Right cardiac atrium (tissue), 5 donors: ENCODE measurements at regions of chr12 and their contacts with region 1.

Region 1: GRCh38 chr12:49872781-49873181 is 29.9 kb upstream of the BCDIN3D start:
- DNase-seq: peak in 2 of 3 donors; percentile 27 to 61
- ATAC-seq: no peak
- H3K4me3 ChIP-seq: no peak overlapping the region
- H3K27ac ChIP-seq: no peak overlapping the region
- H3K4me1 ChIP-seq: peaks cover 14% of the 10 kb centered on the region
- H3K27me3 ChIP-seq: no peaks in the 10 kb centered on the region

Region 2: DNA sequence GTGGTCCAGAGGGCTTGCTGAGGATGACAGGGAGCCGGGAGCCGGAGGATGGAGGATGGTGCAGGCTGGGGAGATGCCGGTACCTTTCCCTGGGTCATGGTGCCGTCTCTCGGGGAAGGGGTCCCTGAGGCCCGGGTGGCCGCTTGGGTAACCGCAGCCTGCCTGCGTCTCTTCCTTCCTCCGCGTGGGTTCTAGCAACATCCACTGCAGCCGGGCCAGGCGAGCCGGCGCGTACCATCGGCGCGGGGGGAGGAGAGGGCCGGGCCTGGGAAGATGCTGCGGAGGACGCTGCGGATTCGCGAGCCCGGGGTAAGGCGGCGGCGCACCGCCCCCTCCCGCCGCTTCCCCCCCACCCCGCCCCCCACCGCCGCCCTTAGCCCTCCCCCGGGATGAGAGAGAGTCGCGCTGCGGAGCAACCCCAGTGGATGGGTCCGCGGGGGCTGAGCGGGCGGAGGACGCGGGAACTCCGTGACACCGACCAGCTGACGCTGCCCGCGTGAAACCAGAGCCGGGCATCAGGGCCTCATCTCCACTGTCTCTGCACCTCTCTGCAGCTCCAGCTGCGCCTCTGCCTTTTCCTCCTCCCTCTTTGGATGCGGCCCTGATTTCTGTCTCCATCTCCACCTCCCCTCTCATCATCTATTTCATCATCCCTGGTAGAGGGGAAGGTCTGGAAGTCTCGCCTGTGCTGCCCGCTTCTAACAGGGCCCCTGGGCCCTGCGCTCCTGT is 31.1 kb after region 1 on chr12 and contains the start of gene FAIM2:
- intact Hi-C with region 1: no loop called
- DNase-seq: peak; percentile 76 to 91 (median 89)
- ATAC-seq: peak; percentile 85 to 90
- H3K4me3 ChIP-seq: peak within 1 kb of the TSS; percentile 34
- H3K27ac ChIP-seq: peak within 1 kb of the TSS; percentile 0
- H3K4me1 ChIP-seq: no peaks in the 10 kb centered on the region
- H3K27me3 ChIP-seq: no peaks in the 10 kb centered on the region
- total RNA-seq, gene FAIM2: 10.4 to 31.1 (median 17.4) TPM

Region 3: GRCh38 chr12:49945394-49946080 is 72.8 kb after region 1 on chr12:
- intact Hi-C with region 1: loop called (anchors 5 to 10 kb)
- DNase-seq: peak; percentile 89 to 95 (median 95)
- ATAC-seq: peak; percentile 93 to 96
- H3K4me3 ChIP-seq: no peak overlapping the region
- H3K27ac ChIP-seq: peak overlapping the region; percentile 26
- H3K4me1 ChIP-seq: no peaks in the 10 kb centered on the region
- H3K27me3 ChIP-seq: no peaks in the 10 kb centered on the region

Region 4: DNA sequence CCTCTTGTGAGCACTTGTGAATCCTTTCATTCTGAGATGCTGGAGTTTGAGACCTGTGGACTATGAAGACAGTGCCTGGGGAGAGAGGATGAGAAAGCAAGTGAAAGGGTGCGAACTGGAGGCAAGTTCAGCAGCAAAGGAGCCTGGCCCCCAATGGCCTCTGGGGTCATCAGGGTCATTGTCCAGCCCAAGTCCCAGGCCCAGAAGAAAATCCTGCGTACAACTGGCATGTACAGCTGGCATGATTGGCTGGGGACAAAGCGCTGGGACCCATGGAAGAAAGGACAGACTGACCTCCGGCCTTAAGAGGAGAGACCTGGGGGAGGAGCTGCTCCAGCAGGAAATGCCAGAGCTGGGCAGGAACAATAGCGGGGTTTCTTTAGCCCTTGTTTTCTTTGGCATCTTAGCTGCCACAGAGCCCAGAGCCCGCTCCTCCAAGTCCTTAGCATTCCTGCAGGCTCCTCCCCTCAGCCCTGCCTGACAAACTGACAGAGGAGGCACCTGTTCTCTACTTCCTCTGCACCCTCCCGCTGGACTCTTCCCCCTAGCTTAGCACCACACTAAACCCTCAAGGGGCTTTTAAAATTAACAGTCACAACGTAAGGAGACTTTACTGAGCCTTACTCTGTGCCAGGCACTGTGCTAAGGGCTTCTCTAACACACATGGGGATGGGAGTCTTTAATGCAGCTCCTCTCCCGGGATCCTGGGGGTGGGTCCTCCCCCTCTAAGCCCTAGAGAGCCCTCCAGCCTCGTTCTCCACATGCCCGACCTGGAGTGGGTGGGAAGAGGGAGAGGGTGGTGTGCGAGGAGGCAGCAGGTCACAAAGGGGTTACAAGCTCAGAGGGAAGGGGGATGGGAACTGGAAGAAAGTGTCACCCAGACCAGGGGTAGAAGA is 87.0 kb after region 1 on chr12:
- intact Hi-C with region 1: loop called in 2 of 4 experiments (anchors 5 to 10 kb)
- DNase-seq: peak in 2 of 3 donors; percentile 68 to 69
- ATAC-seq: peak; percentile 26 to 60
- H3K4me3 ChIP-seq: no peak overlapping the region
- H3K27ac ChIP-seq: no peak overlapping the region
- H3K4me1 ChIP-seq: no peaks in the 10 kb centered on the region
- H3K27me3 ChIP-seq: no peaks in the 10 kb centered on the region

Region 5: DNA sequence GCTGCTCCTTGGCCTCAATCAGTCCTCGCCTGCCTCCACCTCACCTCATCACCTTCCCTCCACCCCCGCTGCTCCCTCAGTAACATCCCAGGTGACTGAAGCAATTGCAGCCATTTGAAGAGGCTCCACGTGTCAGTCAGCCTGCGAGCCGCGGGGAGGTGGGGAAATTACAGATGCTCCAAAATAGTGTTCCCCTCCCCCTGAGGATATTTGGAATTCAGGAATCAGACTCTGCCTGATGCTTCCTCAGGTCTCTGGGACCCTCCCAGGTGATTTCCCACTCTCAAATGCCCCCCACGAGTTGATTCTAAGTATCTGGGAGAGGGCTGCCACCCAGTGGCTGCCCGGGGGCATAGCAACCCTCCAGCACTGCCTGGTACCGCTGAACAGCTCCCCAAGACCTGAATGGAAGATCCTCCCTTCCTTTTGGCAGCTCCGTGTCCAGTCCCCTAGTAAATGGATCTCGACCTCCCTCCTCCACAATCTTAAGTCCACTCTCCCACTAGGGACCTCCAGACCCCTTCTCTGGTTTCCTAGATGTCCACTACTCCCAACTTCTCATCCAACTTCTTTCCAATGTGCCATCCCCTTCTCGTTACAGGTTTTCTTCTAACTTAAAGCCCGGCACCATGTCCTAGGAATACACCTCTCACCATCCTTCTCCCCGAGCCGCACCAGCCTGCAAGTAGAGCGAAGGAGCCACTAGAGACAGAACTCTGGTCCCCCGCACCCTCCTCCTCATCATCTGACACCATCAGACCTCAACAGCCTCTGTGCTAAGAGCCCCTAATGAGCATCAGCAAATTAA is 183.3 kb after region 1 on chr12:
- intact Hi-C with region 1: loop called (anchors 10 kb)
- DNase-seq: peak in 1 of 3 donors; percentile 74
- ATAC-seq: peak; percentile 30 to 54
- H3K4me3 ChIP-seq: no peak overlapping the region
- H3K27ac ChIP-seq: no peak overlapping the region
- H3K4me1 ChIP-seq: no peaks in the 10 kb centered on the region
- H3K27me3 ChIP-seq: no peaks in the 10 kb centered on the region